ENCODE measurements at regions of chr19 and their contacts with region 1.

Region 1: GRCh38 chr19:45469132-45469944 is 1.5 kb downstream of the FOSB start:
- DNase-seq: peak; percentile 97
- ATAC-seq: peak; percentile 57
- H3K4me3 ChIP-seq: peak overlapping the region; percentile 59 to 100 (median 95)
- H3K4me3 Mint-ChIP-seq: peak overlapping the region; percentile 92
- H3K27ac ChIP-seq: peak overlapping the region; percentile 96 to 100
- H3K27ac Mint-ChIP-seq: peak overlapping the region; percentile 95
- H3K4me1 ChIP-seq: peaks cover 38 to 57% of the 10 kb centered on the region in 2 donors
- H3K4me1 Mint-ChIP-seq: peaks cover 50% of the 10 kb centered on the region
- H3K27me3 ChIP-seq: peaks cover 0 to 33% (median 15%) of the 10 kb centered on the region in 4 experiments
- H3K27me3 Mint-ChIP-seq: peaks cover 24% of the 10 kb centered on the region
- CTCF ChIP-seq: no peak

Region 2: GRCh38 chr19:45455707-45456499 is 13.4 kb before region 1 on chr19:
- CTCF ChIA-PET with region 1: interaction called, 7 read pairs
- POLR2A ChIA-PET with region 1: interaction called, 9 read pairs
- intact Hi-C with region 1: loop called (anchors 1 kb)
- DNase-seq: peak; percentile 90
- ATAC-seq: peak; percentile 56
- H3K4me3 ChIP-seq: peak overlapping the region in 1 of 5 experiments; percentile 3
- H3K4me3 Mint-ChIP-seq: peak overlapping the region; percentile 60
- H3K27ac ChIP-seq: peak overlapping the region in 1 of 2 donors; percentile 64
- H3K27ac Mint-ChIP-seq: peak overlapping the region; percentile 77
- H3K4me1 ChIP-seq: peaks cover 23 to 38% of the 10 kb centered on the region in 2 donors
- H3K4me1 Mint-ChIP-seq: peaks cover 43% of the 10 kb centered on the region
- H3K27me3 ChIP-seq: peaks cover 0 to 2% (median 0%) of the 10 kb centered on the region in 4 experiments
- H3K27me3 Mint-ChIP-seq: no peaks in the 10 kb centered on the region
- CTCF ChIP-seq: no peak

Region 3: DNA sequence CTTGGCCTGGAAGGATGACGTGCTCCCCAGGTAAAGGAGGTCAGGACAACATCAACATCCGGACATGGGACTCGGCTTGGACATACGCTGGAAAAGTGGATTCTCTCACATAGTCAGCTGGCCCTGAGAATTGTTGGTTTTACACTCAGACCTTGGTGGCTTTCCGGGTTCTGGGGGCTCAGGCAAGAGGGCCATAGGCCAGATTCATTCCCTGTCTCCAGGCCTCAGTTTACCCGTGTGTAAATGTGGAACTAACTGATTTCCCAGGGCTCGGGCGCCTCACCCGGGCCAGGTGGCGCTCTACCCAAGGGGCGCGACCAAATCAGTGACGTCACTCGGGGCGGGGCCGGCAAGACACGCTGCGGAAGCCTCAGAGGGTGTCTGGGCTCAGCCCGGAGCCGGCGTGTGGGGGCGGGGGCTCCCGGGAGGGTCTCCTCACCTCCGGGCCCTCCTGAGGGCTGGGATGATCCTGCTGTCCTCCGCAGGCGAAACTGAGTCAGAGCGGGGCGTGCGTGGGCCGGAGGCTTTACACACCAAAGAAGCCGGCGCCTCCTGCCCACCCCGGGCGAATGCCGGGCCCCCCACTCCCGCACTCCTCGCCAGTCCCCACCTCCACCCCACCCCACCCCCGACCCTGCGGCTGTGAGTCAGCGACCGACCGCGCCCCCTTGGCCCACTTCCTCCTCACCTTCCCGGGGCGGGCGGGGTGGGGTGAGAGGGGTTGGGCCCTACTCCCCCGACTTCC is 37.1 kb after region 1 on chr19:
- CTCF ChIA-PET with region 1: no interaction called
- POLR2A ChIA-PET with region 1: interaction called, 3 read pairs
- intact Hi-C with region 1: loop called (anchors 1 kb)
- DNase-seq: peak; percentile 98
- ATAC-seq: peak; percentile 74
- H3K4me3 ChIP-seq: peak overlapping the region; percentile 63 to 96 (median 84)
- H3K4me3 Mint-ChIP-seq: peak overlapping the region; percentile 94
- H3K27ac ChIP-seq: peak overlapping the region; percentile 83 to 87
- H3K27ac Mint-ChIP-seq: peak overlapping the region; percentile 94
- H3K4me1 ChIP-seq: peaks cover 26 to 43% of the 10 kb centered on the region in 2 donors
- H3K4me1 Mint-ChIP-seq: peaks cover 54% of the 10 kb centered on the region
- H3K27me3 ChIP-seq: no peaks in the 10 kb centered on the region
- H3K27me3 Mint-ChIP-seq: no peaks in the 10 kb centered on the region
- CTCF ChIP-seq: peak; percentile 63

Region 4: DNA sequence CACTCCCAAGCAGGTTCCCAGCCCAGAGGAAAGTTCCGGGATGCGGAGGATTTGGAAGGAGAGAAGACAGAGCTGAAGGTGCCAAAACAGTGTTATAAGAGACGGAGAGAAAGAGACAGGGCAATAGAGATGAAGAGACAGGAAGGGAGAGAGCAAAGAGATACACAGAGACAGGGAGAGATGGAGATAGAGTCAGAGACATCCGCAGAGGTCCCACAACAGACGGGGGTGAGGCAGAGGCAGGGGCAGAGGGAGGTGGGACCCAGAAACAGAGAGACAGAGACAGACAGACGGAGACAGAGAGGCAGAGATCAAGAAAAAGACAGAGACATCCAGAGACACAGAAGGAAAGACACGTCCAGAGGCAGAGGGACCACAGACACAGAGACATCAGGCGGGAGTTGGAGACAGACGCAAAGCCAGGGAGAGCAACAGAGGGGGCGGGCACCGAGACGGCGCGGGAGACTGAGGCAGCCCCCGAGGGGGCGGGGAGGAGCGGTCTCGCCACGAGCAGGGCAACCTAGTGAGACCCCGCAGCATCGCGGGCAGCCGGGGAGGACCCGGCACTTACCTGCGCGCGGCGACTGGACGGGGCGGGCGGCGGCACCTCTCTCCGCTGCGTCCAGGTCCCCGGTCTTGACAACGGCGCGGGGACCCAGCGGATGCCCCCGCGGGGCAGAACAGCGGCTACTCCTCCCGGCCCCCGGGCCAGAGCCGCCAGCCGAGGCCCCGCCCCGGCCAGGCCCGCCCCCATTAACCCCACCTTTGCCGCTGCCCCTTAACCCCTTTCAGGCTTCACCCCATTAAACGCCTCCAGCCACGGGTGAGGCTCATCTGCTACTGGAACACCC is 132.4 kb after region 1 on chr19 and contains the start of gene GPR4:
- CTCF ChIA-PET with region 1: no interaction called
- POLR2A ChIA-PET with region 1: no interaction called
- intact Hi-C with region 1: no loop called
- DNase-seq: peak; percentile 27
- ATAC-seq: no peak
- H3K4me3 ChIP-seq: no peak within 1 kb of the TSS
- H3K4me3 Mint-ChIP-seq: no peak within 1 kb of the TSS
- H3K27ac ChIP-seq: no peak within 1 kb of the TSS
- H3K27ac Mint-ChIP-seq: no peak within 1 kb of the TSS
- H3K4me1 ChIP-seq: peaks cover 29 to 51% of the 10 kb centered on the region in 2 donors
- H3K4me1 Mint-ChIP-seq: peaks cover 40% of the 10 kb centered on the region
- H3K27me3 ChIP-seq: peaks cover 0 to 74% (median 46%) of the 10 kb centered on the region in 4 experiments
- H3K27me3 Mint-ChIP-seq: peaks cover 61% of the 10 kb centered on the region
- CTCF ChIP-seq: no peak
- total RNA-seq, gene GPR4: not detected in 2 replicates

Region 5: DNA sequence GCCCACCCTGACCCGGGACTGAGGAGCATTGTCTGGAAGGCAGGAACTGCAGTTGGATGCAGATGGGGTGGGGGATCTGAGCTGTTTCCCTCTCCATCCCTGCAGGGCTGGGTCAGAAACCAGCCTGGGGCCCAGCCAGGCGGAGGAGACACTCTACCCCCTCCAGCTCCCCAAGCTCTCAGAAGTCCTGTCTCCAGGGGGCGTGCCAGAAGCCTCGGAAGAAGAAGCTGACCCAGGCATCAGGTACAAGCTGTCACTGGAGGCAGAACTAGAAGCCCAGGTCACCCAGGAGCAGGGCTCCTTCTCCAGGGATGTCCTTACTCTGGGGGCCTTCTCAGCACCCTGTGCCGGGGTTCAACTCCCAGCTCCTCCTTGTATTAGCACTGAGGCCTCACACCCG is 284.2 kb after region 1 on chr19:
- CTCF ChIA-PET with region 1: no interaction called
- POLR2A ChIA-PET with region 1: no interaction called
- intact Hi-C with region 1: no loop called
- DNase-seq: no peak
- ATAC-seq: no peak
- H3K4me3 ChIP-seq: no peak overlapping the region
- H3K4me3 Mint-ChIP-seq: no peak overlapping the region
- H3K27ac ChIP-seq: no peak overlapping the region
- H3K27ac Mint-ChIP-seq: no peak overlapping the region
- H3K4me1 ChIP-seq: no peaks in the 10 kb centered on the region
- H3K4me1 Mint-ChIP-seq: no peaks in the 10 kb centered on the region
- H3K27me3 ChIP-seq: peaks cover 0 to 2% (median 0%) of the 10 kb centered on the region in 4 experiments
- H3K27me3 Mint-ChIP-seq: peaks cover 6% of the 10 kb centered on the region
- CTCF ChIP-seq: no peak